ENCODE measurements at regions of chrX and their contacts with region 1.

Region 1: GRCh38 chrX:134782796-134783195 is 124.5 kb upstream of the PLAC1 start:
- DNase-seq: peak in 1 of 2 experiments; percentile 35
- ATAC-seq: peak in 1 of 2 experiments; percentile 54; a peak in 2 of 6 replicates
- H3K4me3 ChIP-seq: no peak overlapping the region
- H3K27ac ChIP-seq: peak overlapping the region in 1 of 2 experiments; percentile 35; a peak in 1 of 6 replicates
- H3K4me1 ChIP-seq: peaks cover 11% of the 10 kb centered on the region; the same call in 2 of the 3 replicates
- CTCF ChIP-seq: peak; percentile 66
- EP300 ChIP-seq: no peak
- POLR2A ChIP-seq: no peak
- RAD21 ChIP-seq: peak; percentile 62

Region 2: GRCh38 chrX:134355996-134356395 is 426.8 kb before region 1 on chrX:
- CTCF ChIA-PET with region 1: no interaction called
- POLR2A ChIA-PET with region 1: no interaction called
- DNase-seq: no peak
- ATAC-seq: no peak
- H3K4me3 ChIP-seq: no peak overlapping the region
- H3K27ac ChIP-seq: no peak overlapping the region
- H3K4me1 ChIP-seq: no peaks in the 10 kb centered on the region
- CTCF ChIP-seq: no peak
- EP300 ChIP-seq: no peak
- POLR2A ChIP-seq: no peak
- RAD21 ChIP-seq: no peak

Region 3: DNA sequence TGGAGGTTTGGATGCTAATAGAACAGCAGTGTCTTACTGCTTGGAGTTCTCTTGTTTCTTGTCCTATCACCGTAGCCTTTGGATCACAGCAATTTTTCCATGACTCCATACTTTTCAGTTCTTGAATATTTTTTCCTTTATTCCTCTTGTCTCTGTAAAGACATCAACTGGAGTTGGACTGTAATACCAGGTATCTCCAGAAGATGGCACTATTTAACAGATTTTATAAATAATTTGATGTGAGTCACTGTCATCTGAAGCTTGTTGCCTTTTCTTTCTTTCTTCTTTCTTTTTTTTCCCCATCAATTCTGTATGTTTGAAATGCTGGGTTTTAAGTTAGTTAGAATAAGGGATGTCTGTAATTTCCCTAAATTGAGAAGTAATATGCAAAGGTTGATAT is 298.8 kb before region 1 on chrX:
- CTCF ChIA-PET with region 1: interaction called, 32 read pairs
- POLR2A ChIA-PET with region 1: no interaction called
- DNase-seq: peak; percentile 7 to 67
- ATAC-seq: peak in 1 of 2 experiments; percentile 67; a peak in 3 of 6 replicates
- H3K4me3 ChIP-seq: no peak overlapping the region
- H3K27ac ChIP-seq: peak overlapping the region; percentile 18 to 23; a peak in 2 of 6 replicates
- H3K4me1 ChIP-seq: no peaks in the 10 kb centered on the region
- CTCF ChIP-seq: peak; percentile 65
- EP300 ChIP-seq: no peak
- POLR2A ChIP-seq: no peak
- RAD21 ChIP-seq: peak; percentile 69 to 78

Region 4: DNA sequence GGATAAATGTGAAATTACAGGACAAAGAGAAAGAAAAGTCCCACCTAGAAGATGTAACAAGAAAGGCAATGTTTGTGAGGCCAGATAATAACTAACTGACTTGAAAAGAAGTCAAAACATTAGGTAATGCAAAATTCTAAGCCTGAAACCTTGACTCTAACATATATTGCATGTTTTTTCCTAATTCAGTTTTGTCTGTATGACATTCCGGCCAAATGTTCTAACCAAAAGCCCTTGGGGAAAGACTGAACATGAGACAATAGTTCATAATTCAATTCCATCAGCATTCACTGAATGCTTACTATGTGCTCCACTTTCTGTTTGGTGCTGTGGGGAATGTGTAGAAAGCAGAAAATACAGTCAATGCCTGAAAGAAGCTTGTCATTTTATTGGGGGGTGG is 39.7 kb before region 1 on chrX:
- CTCF ChIA-PET with region 1: no interaction called
- POLR2A ChIA-PET with region 1: no interaction called
- DNase-seq: no peak
- ATAC-seq: no peak
- H3K4me3 ChIP-seq: no peak overlapping the region
- H3K27ac ChIP-seq: peak overlapping the region in 1 of 2 experiments; percentile 48; a peak in 2 of 6 replicates
- H3K4me1 ChIP-seq: peaks cover 6% of the 10 kb centered on the region; the same call in 2 of the 3 replicates
- CTCF ChIP-seq: no peak
- EP300 ChIP-seq: no peak
- POLR2A ChIP-seq: no peak
- RAD21 ChIP-seq: no peak

Region 5: DNA sequence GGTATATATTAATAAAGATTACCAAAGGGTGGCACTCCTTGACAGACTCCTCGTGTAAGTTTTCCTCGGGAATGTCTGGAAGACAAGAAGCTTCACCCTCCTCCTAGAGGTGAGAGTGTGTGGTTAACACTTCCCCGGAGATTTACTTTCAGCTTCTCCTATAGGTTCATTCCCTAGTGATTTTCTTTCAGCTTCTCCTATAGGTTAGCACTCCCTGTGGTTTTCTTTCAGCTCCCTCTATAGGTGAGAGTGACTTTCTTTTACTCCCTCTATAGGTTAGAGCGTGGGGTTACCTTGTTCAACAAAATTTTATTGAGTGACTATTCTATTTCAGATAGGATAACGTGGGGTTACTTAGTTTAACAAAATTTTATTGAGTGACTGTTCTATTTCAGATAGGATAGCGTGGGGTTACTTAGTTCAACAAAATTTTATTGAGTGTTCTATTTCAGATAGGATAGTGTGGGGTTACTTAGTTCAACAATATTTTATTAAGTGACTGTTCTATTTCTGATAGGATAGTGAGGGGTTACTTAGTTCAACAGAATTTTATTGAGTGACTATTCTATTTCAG is 18.5 kb before region 1 on chrX:
- CTCF ChIA-PET with region 1: interaction called, 10 read pairs
- POLR2A ChIA-PET with region 1: no interaction called
- DNase-seq: peak; percentile 72 to 82
- ATAC-seq: peak; percentile 96 to 97
- H3K4me3 ChIP-seq: no peak overlapping the region
- H3K27ac ChIP-seq: no peak overlapping the region
- H3K4me1 ChIP-seq: no peaks in the 10 kb centered on the region
- CTCF ChIP-seq: peak; percentile 32; the same call in 2 of the 3 replicates
- EP300 ChIP-seq: no peak
- POLR2A ChIP-seq: no peak
- RAD21 ChIP-seq: peak in 1 of 2 experiments; percentile 29; a peak in 1 of 5 replicates

Measured in A549 (cell line).